ENCODE measurements at regions of chr9 and their contacts with region 1.

Region 1: GRCh38 chr9:98912450-98912849 is 31.3 kb upstream of the COL15A1 start:
- DNase-seq: no peak
- ATAC-seq: no peak
- H3K4me3 Mint-ChIP-seq: no peak overlapping the region
- H3K27ac Mint-ChIP-seq: no peak overlapping the region
- H3K4me1 Mint-ChIP-seq: no peaks in the 10 kb centered on the region
- H3K27me3 Mint-ChIP-seq: peaks cover 2% of the 10 kb centered on the region

Region 2: GRCh38 chr9:98678242-98678842 is 234.1 kb before region 1 on chr9:
- CTCF ChIA-PET with region 1: no interaction called
- POLR2A ChIA-PET with region 1: no interaction called
- intact Hi-C with region 1: no loop called
- DNase-seq: peak; percentile 48
- ATAC-seq: peak; percentile 30
- H3K4me3 Mint-ChIP-seq: no peak overlapping the region
- H3K27ac Mint-ChIP-seq: no peak overlapping the region
- H3K4me1 Mint-ChIP-seq: no peaks in the 10 kb centered on the region
- H3K27me3 Mint-ChIP-seq: peaks cover 17% of the 10 kb centered on the region

Region 3: DNA sequence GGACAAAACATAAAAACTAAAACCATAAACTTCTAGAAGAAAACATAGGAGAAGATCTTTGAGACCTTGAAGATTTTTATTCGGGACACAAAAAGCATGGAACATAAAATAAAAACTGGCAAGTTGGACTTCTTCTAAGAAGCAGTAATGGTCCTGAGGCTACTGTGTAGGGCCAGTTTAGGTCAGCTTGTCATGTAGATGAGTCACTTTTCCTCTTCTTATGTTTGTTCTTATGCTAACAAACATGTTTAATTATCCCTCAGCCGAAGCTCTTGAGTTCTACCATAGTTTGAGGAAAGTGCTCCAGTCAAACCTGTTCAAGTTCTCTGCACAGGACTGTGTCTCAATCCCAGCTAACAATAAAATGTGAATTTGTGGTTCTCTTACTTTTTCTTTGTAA is 627.5 kb after region 1 on chr9:
- CTCF ChIA-PET with region 1: no interaction called
- POLR2A ChIA-PET with region 1: interaction called, 12 read pairs
- intact Hi-C with region 1: no loop called
- DNase-seq: no peak
- ATAC-seq: no peak
- H3K4me3 Mint-ChIP-seq: no peak overlapping the region
- H3K27ac Mint-ChIP-seq: no peak overlapping the region
- H3K4me1 Mint-ChIP-seq: no peaks in the 10 kb centered on the region
- H3K27me3 Mint-ChIP-seq: peaks cover 7% of the 10 kb centered on the region